ENCODE measurements at regions of chr18 and their contacts with region 1.

Region 1: GRCh38 chr18:50507120-50507590 is 52.7 kb upstream of the MAPK4 start:
- DNase-seq: no peak
- ATAC-seq: peak; percentile 78 to 83
- H3K4me3 ChIP-seq: no peak overlapping the region
- H3K27ac ChIP-seq: no peak overlapping the region
- H3K4me1 ChIP-seq: no peaks in the 10 kb centered on the region
- H3K27me3 ChIP-seq: no peaks in the 10 kb centered on the region
- CTCF ChIP-seq: peak; percentile 56

Region 2: DNA sequence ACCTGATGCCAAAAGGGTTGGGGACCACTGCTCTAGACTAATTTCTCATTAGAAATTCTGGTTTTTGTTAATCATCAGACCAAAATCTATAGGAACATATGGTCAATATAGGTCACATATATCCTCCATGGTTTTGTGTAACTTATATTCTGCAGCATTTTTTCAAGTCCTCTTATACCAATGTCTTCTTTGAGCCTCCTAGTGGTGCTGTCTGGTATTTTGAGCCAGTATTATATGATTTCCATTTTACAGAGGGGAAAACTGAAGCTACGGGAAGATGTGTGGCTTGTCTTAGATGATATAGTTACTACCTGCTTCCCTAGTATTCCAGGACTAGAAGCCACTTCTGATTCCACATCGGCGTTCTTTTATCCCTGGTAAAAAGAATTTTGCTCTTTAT is 66.5 kb after region 1 on chr18:
- intact Hi-C with region 1: no loop called
- DNase-seq: no peak
- ATAC-seq: no peak
- H3K4me3 ChIP-seq: no peak overlapping the region
- H3K27ac ChIP-seq: no peak overlapping the region
- H3K4me1 ChIP-seq: no peaks in the 10 kb centered on the region
- H3K27me3 ChIP-seq: no peaks in the 10 kb centered on the region
- CTCF ChIP-seq: no peak

Region 3: DNA sequence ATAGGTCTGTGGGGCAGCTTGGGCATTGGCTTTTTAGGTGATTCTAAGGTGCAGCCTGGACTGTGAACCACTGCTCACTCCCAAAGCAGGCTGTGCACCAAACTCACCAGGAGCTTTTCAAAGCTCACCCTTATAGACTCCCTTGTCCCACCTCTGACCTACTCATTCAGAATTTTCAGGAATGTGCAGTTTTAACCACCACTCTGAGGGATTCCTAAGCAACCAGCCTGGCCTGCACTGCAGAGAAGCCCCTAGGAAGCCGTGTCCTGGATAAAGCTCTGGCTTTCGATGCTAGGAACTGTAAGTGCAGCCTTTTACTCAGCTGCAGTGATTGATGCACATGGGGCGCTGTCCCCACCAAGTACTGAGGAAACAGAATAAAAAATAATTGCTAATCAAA is 279.7 kb after region 1 on chr18:
- intact Hi-C with region 1: loop called (anchors 10 kb)
- DNase-seq: no peak
- ATAC-seq: no peak
- H3K4me3 ChIP-seq: no peak overlapping the region
- H3K27ac ChIP-seq: no peak overlapping the region
- H3K4me1 ChIP-seq: no peaks in the 10 kb centered on the region
- H3K27me3 ChIP-seq: no peaks in the 10 kb centered on the region
- CTCF ChIP-seq: no peak